PC-3 (cell line): ENCODE measurements at regions of chr1 and their contacts with region 1.

Region 1: DNA sequence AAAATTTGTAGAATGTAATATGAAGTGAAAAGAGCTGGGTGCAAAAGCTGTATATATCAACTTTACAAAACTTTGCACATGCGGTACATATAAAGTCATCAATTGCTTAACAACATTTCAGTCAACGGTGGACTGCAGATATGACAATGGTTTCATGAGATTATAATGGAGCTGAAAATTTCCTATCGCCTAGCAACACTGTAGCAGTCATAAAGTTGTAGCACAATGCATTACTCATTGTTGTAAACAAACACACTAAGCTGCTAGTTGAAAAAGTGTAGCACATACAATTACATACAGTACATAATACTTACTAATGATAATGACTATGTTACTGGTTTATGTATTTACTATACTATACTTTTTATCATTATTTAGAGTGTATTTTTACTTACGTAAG is 64.0 kb downstream of the RGS7 start:
- DNase-seq: peak; percentile 52
- ATAC-seq: peak; percentile 77
- H3K4me3 ChIP-seq: no peak overlapping the region
- H3K27ac ChIP-seq: no peak overlapping the region
- H3K4me1 ChIP-seq: no peaks in the 10 kb centered on the region
- H3K27me3 ChIP-seq: peaks cover 73% of the 10 kb centered on the region
- CTCF ChIP-seq: no peak

Region 2: GRCh38 chr1:241235256-241235897 is 57.6 kb before region 1 on chr1:
- CTCF ChIA-PET with region 1: no interaction called
- POLR2A ChIA-PET with region 1: no interaction called
- intact Hi-C with region 1: loop called (anchors 10 kb)
- DNase-seq: no peak
- ATAC-seq: no peak
- H3K4me3 ChIP-seq: no peak overlapping the region
- H3K27ac ChIP-seq: no peak overlapping the region
- H3K4me1 ChIP-seq: peaks cover 15% of the 10 kb centered on the region
- H3K27me3 ChIP-seq: peaks cover 87% of the 10 kb centered on the region
- CTCF ChIP-seq: no peak